ENCODE measurements at regions of chr6 and their contacts with region 1.

Region 1: DNA sequence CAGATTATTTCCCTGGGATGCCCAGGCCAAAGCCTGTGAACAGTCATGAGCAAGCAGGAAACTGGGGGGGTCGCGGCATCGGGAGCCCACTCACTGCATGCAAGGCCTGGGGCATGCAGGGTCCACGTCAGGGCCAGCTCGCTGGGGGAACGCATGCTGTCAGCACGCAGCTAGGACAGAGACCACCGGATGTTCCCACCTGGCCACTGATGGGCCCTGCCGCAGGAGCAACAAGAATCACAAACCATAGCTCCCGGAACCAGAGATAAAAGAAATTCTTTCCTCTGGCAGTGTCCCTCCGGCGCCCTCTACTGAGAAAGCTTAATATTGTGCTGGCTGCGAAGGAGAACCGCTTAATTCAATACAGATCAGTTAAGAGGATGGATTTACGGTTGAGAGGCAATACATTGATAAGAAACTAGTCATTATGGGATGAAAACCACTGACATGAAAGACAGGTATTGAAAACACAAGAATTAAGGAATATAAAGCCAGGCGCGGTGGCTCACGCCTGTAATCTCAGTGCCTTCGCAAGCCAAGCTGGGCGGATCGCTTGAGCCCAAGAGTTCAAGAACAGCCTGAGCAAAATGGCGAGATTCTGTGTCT is 32.6 kb downstream of the C6orf15 start:
- DNase-seq: peak; percentile 66
- ATAC-seq: peak; percentile 85
- H3K4me3 Mint-ChIP-seq: peak overlapping the region; percentile 44
- H3K27ac Mint-ChIP-seq: no peak overlapping the region
- H3K4me1 Mint-ChIP-seq: peaks cover 5% of the 10 kb centered on the region
- H3K27me3 Mint-ChIP-seq: peaks cover 12% of the 10 kb centered on the region

Region 2: DNA sequence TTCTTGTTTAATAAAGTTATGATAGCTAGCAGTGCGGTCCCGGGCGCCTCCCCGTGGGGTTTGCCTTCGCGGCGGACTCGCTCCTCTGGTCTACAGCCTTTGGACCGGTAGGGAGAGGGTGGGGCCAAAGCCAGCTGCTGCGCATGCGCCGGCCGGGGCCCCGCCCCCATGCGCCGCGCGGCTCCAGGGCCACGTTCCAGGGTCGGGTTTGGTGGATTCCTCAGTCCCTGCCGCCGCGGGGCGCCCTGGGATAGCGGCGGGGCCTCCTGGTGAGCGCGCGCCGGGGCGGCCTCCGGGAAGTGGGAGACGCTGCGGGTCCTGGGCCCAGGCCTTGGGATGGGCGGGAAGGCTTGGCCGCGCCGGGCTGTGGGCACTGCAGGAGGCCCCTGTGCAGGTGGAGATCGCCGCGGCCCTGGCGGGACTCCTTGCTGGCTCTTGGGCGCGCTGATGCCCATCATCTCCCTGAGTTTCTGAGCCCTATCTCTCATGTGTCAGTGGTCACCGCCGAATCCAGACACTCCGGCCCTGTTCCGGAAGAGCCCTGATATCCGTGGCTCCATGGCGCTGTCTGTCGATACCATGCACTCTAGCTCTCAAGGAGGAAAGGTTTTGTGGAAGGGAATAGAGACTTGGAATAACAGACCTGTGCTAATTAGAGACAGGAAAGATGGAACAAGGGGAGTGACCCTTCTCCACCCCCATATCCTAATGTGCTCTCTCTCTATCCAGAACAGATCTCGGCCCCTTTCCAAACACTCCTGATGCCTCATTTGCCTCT is 165.5 kb before region 1 on chr6 and contains the start of gene VARS2:
- POLR2A ChIA-PET with region 1: interaction called, 13 read pairs
- DNase-seq: peak; percentile 95
- ATAC-seq: peak; percentile 95
- H3K4me3 Mint-ChIP-seq: peak within 1 kb of the TSS; percentile 98
- H3K27ac Mint-ChIP-seq: peak within 1 kb of the TSS; percentile 90
- H3K4me1 Mint-ChIP-seq: peaks cover 25% of the 10 kb centered on the region
- H3K27me3 Mint-ChIP-seq: no peaks in the 10 kb centered on the region
- total RNA-seq, gene VARS2: 38.0 to 43.1 TPM

Region 3: DNA sequence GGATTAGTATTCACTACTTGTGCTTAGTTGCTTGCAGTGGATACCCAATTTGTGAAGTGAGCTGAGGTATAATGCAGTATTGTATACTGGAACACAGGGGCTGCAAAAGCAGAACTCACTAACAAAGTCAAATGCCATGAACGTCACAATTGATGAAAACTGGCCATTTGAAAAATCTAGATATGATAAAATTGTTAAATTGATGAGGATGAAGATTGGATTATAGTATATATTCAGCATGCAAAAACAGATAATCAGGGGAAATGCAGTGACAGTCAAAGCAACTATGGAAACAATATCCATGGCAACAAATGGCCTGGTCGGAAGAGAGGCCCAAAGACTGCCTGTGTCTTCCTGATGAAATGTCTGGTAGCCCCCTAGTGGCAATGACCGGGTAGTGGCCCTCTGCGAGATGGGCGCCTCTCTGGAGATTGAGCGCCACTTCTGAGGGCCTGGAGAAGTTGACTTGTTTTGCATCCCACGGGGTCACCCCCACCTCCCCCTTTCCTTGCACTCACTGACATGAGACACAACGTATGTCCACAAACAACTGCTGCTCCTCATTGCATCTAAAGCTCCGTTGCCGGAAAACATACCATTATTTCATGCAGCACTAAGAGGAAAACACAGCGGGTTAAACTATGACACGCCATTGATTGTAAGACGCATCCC is 11.0 kb before region 1 on chr6:
- POLR2A ChIA-PET with region 1: no interaction called
- DNase-seq: peak; percentile 76
- ATAC-seq: peak; percentile 92
- H3K4me3 Mint-ChIP-seq: no peak overlapping the region
- H3K27ac Mint-ChIP-seq: no peak overlapping the region
- H3K4me1 Mint-ChIP-seq: no peaks in the 10 kb centered on the region
- H3K27me3 Mint-ChIP-seq: no peaks in the 10 kb centered on the region